CD4-positive, alpha-beta memory T cell (primary cell): ENCODE measurements at regions of chr10 and their contacts with region 1.

Region 1: DNA sequence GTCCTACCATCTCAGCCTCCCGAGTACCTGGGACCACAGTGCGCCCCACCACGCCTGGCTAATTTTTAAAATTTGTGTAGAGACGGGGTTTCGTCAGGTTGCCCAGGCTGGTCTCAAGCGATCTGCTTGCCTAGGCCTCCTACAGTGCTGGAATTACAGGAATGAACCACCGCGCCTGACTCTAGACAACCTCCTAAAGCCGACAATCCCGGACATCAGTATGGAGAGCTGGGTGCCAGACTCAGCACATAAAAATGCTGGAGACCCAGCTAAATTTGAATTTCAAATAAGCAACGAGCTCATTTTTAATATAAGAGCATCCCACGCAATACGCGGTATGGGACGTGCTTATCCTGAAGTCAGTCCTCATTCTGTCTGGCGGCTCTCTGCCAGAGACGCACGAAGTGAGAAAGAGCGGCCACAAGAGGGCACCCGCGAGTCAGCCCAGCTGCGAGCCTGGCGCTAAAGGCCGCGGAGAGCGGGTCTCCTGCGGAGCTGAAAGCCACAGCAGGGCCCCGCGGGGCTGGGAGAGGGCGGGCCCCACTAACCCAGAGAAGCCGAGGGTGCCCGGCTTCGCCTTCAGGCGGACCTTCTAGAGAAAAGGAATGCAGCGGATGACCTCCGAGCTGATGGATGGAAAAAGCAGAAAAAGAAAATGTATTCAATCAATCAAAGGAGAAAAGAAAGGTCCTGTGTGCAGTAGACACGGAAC is 7.0 kb downstream of the CALY start:
- DNase-seq: peak; percentile 77 to 84 (median 81)
- H3K4me3 ChIP-seq: no peak overlapping the region
- H3K4me3 Mint-ChIP-seq: peak overlapping the region in 5 of 8 donors; percentile 21 to 63 (median 32)
- H3K27ac ChIP-seq: no peak overlapping the region
- H3K27ac Mint-ChIP-seq: peak overlapping the region in 2 of 7 donors; percentile 35 to 79
- H3K4me1 ChIP-seq: peaks cover 24% of the 10 kb centered on the region
- H3K4me1 Mint-ChIP-seq: peaks cover 3 to 31% (median 12%) of the 10 kb centered on the region in 4 donors
- H3K27me3 ChIP-seq: peaks cover 31% of the 10 kb centered on the region
- H3K27me3 Mint-ChIP-seq: peaks cover 13 to 18% of the 10 kb centered on the region in 2 donors

Region 2: GRCh38 chr10:133378251-133379096 is 48.8 kb after region 1 on chr10:
- CTCF ChIA-PET with region 1: interaction called, 7 read pairs
- POLR2A ChIA-PET with region 1: interaction called, 6 read pairs
- intact Hi-C with region 1: loop called (anchors 1 kb)
- DNase-seq: peak; percentile 57 to 68 (median 60)
- H3K4me3 ChIP-seq: peak overlapping the region; percentile 57 to 96
- H3K4me3 Mint-ChIP-seq: peak overlapping the region; percentile 86 to 91 (median 88)
- H3K27ac ChIP-seq: peak overlapping the region; percentile 60
- H3K27ac Mint-ChIP-seq: peak overlapping the region in 6 of 7 donors; percentile 68 to 85 (median 76)
- H3K4me1 ChIP-seq: peaks cover 17% of the 10 kb centered on the region
- H3K4me1 Mint-ChIP-seq: peaks cover 4 to 20% (median 8%) of the 10 kb centered on the region in 4 donors
- H3K27me3 ChIP-seq: no peaks in the 10 kb centered on the region
- H3K27me3 Mint-ChIP-seq: no peaks in the 10 kb centered on the region

Region 3: DNA sequence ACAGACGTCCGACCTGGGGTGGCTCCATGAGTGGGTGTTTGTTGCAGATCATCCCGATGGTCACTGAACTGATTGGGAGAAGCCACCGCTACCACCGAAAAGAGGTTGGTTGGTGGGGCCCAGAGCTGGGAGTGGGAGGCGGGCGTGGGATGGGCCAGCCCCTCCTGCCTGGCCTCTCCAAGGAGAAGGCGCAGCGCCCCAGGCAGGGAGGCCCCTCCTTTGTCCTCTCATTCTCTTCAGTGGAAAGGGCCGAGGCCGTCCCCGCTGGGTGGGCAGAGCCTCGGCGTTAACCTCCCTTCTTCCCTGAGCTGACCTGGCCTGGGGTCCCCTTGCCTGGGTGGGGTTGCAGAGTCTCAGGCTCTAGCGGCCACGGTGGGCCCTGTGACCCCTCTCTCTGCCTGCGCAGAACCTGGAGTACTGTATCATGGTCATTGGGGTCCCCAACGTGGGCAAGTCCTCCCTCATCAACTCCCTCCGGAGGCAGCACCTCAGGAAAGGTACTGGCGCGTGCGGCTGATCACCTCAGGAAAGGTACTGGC is 69.5 kb after region 1 on chr10:
- CTCF ChIA-PET with region 1: interaction called, 12 read pairs
- POLR2A ChIA-PET with region 1: interaction called, 13 read pairs
- intact Hi-C with region 1: loop called (anchors 2 kb)
- DNase-seq: no peak
- H3K4me3 ChIP-seq: no peak overlapping the region
- H3K4me3 Mint-ChIP-seq: no peak overlapping the region
- H3K27ac ChIP-seq: no peak overlapping the region
- H3K27ac Mint-ChIP-seq: no peak overlapping the region
- H3K4me1 ChIP-seq: peaks cover 33% of the 10 kb centered on the region
- H3K4me1 Mint-ChIP-seq: peaks cover 22 to 60% (median 35%) of the 10 kb centered on the region in 4 donors
- H3K27me3 ChIP-seq: no peaks in the 10 kb centered on the region
- H3K27me3 Mint-ChIP-seq: no peaks in the 10 kb centered on the region

Region 4: DNA sequence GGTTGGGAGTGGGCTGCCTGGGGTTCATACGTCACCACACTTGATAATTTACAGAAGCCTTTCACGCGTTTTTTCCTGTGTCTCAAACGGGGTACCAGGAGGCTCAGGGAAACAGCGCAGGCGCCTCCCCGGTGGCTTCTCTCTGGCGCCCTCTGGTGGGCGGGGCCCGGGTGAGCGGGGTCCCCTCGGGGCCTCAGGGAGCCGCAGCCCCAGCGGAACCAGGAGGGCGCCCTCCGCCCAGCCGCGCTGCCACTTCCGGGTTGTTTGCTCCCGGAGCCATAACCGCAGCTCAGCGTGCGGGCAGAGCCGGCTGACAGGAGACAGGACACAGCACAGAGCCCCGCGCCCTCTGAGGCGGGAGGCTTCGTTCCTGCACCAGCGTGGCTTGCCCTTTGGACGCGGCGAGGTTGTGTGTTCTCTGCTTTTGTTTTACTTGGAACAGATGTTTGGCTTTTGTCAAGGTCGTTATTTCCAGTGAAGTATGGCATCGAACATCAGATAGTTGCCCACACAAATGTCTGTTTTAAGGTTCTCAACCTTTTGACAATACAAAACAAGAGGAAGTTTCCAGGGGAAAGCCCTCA is 190.6 kb after region 1 on chr10:
- CTCF ChIA-PET with region 1: interaction called, 10 read pairs
- POLR2A ChIA-PET with region 1: interaction called, 3 read pairs
- intact Hi-C with region 1: loop called (anchors 1 kb)
- DNase-seq: peak; percentile 82 to 88 (median 83)
- H3K4me3 ChIP-seq: peak overlapping the region in 1 of 2 donors; percentile 36
- H3K4me3 Mint-ChIP-seq: peak overlapping the region; percentile 60 to 79 (median 67)
- H3K27ac ChIP-seq: no peak overlapping the region
- H3K27ac Mint-ChIP-seq: peak overlapping the region; percentile 29 to 69 (median 48)
- H3K4me1 ChIP-seq: peaks cover 13% of the 10 kb centered on the region
- H3K4me1 Mint-ChIP-seq: peaks cover 5 to 20% (median 14%) of the 10 kb centered on the region in 4 donors
- H3K27me3 ChIP-seq: no peaks in the 10 kb centered on the region
- H3K27me3 Mint-ChIP-seq: peaks cover 0 to 1% of the 10 kb centered on the region in 2 donors